WTC11 (cell line): ENCODE measurements at regions of chr11 and their contacts with region 1.

Region 1: DNA sequence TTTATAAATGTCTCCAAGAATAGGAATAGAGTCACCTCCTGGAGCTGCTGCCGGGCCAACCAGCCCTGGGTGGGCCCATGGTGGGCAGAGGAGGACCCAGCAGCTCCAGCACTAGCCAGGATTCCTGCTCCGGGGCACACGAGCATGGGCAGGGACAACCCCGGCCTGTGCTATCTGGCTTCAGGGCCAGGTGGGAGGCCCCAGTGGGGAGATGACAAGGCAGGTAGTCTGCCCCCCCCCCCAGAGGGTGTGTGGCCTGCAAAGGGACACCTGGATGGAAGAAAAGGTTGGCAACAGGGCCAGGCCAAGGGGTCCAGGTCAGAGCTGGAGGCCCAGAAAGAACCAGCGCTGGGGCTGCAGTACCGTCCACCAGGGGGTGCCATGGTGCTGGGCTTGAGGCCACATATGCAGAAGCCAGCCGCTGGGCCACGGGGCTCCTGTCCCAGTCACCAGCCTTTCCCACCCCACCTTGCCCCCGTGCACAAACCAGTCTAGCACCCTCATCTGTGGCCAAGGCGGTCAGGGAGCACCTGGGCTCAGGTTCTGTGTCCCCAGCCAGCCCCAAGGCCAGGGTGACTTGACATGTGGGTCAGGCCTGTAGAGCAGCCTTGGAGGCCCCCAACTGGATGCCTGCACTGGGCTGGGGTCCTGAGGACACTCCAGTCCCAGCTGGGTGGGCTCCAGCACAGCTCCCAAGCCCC is 3.5 kb downstream of the TSPAN32 start:
- DNase-seq: peak; percentile 93
- ATAC-seq: peak; percentile 85
- H3K4me3 Mint-ChIP-seq: no peak overlapping the region
- H3K27ac Mint-ChIP-seq: no peak overlapping the region
- H3K4me1 Mint-ChIP-seq: peaks cover 4% of the 10 kb centered on the region
- H3K27me3 Mint-ChIP-seq: no peaks in the 10 kb centered on the region
- CTCF ChIP-seq: peak; percentile 74

Region 2: DNA sequence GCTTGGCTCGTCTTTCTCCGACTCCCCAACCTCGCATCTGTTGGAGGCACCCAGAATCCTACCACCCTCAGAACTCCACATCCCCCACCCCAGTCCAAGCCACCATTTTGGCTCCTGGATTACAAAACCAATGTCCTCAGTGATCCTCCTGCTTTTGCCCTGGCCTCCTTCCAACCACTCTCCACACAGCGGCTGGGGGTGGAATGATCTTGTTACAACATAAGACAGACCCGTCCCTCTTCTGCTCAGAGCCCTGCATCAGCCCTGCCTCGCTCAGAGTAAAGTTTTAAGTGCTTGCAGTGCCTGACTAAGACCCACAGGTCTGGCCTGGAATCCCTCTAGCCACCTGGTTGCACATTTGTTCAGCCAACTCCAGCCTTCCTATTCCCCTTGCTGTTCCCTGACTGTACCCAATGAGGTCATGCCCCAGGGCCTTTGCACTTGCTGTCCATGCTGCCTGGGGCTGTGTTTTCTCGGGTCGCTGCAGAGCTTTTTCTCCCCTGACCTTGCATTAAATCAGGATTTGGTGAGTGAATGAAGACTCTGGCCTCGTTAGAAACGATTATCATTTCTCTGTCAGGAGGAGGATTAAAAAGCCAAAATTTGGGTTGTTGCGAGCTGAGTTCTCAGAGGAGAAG is 233.4 kb before region 1 on chr11:
- CTCF ChIA-PET with region 1: no interaction called
- POLR2A ChIA-PET with region 1: no interaction called
- DNase-seq: no peak
- ATAC-seq: no peak
- H3K4me3 Mint-ChIP-seq: no peak overlapping the region
- H3K27ac Mint-ChIP-seq: no peak overlapping the region
- H3K4me1 Mint-ChIP-seq: no peaks in the 10 kb centered on the region
- H3K27me3 Mint-ChIP-seq: peaks cover 20% of the 10 kb centered on the region
- CTCF ChIP-seq: no peak

Region 3: GRCh38 chr11:2186669-2187279 is 118.5 kb before region 1 on chr11:
- CTCF ChIA-PET with region 1: interaction called, 24 read pairs
- POLR2A ChIA-PET with region 1: no interaction called
- DNase-seq: peak; percentile 56
- ATAC-seq: peak; percentile 78
- H3K4me3 Mint-ChIP-seq: no peak overlapping the region
- H3K27ac Mint-ChIP-seq: no peak overlapping the region
- H3K4me1 Mint-ChIP-seq: no peaks in the 10 kb centered on the region
- H3K27me3 Mint-ChIP-seq: peaks cover 5% of the 10 kb centered on the region
- CTCF ChIP-seq: peak; percentile 41

Region 4: DNA sequence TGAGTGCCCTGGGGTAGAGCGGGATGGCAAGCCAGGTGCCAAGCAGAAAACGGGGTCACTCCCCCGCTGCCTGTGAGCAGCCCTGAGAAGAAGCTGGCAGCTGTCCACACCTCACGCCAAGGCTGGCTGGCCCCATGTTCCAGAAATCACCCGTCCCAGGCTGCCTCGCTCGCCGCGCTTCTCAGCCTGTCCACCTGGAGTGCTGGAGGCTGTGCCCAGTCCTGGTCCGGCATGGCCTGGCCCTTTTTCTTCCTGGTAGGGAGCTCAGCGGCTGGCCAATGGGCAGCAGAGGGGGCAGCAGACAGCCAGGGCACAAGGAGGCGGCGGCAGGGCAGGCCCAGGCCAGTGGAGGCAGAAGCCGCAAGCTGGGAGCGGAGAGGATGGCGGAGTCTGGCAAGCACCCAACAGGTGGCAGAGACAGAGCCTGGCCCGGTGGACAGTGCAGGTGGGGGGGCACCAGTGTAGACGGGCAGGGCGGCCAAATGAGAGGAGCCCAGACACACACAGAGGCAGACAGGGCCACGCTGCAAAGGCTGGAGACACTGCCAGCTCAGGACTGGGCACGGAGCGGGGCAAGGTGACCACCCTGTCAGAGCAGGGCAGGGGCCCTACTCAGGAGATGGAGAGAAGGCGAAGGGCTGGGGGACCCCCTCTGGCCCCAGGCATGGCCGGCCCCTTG is 96.5 kb before region 1 on chr11:
- CTCF ChIA-PET with region 1: interaction called, 11 read pairs
- POLR2A ChIA-PET with region 1: no interaction called
- DNase-seq: no peak
- ATAC-seq: peak; percentile 64
- H3K4me3 Mint-ChIP-seq: no peak overlapping the region
- H3K27ac Mint-ChIP-seq: no peak overlapping the region
- H3K4me1 Mint-ChIP-seq: peaks cover 10% of the 10 kb centered on the region
- H3K27me3 Mint-ChIP-seq: peaks cover 15% of the 10 kb centered on the region; the same call in 1 of the 2 replicates
- CTCF ChIP-seq: no peak

Region 5: GRCh38 chr11:2377511-2378443 is 72.5 kb after region 1 on chr11:
- CTCF ChIA-PET with region 1: interaction called, 27 read pairs
- POLR2A ChIA-PET with region 1: interaction called, 3 read pairs
- DNase-seq: peak; percentile 65
- ATAC-seq: peak; percentile 25
- H3K4me3 Mint-ChIP-seq: peak overlapping the region; percentile 87
- H3K27ac Mint-ChIP-seq: no peak overlapping the region; the same call in 1 of the 2 replicates
- H3K4me1 Mint-ChIP-seq: peaks cover 18% of the 10 kb centered on the region
- H3K27me3 Mint-ChIP-seq: peaks cover 6% of the 10 kb centered on the region
- CTCF ChIP-seq: no peak

Region 6: DNA sequence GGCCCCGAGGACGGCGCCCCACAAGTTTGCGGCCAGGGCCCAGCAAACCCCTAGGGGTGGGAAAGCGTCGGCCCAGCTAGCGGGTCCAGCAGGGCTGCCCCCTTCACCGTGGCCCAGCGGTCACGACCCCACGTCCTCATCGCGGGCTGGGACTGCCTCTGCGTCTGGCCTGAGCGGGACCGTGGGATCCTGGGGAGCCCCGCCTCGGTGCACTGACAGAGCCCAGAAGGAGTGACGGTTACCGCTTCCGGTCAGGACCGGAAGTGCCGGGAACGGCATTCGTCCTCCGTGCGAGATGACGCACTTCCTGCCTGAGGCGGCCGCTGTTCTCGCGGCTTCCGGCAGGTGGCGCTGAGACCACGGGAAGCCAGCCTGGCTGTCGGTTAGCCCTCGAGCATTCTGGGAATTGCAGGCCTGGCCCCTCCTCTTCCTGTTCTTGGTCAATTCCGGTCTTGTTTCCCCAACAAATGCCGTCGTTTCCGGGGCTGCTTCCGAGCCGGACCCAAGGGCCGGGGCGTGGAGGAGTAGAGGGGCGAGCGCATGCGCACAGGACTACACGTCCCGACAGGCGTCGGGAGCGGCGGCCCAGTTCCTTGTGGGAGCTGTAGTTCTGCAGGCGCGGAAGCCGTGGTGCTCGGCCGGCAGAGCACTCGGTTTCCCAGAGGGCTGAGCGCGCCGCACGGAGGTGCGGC is 94.9 kb after region 1 on chr11 and contains the start of gene TSSC4:
- CTCF ChIA-PET with region 1: interaction called, 62 read pairs
- POLR2A ChIA-PET with region 1: interaction called, 4 read pairs
- DNase-seq: peak; percentile 98
- ATAC-seq: peak; percentile 90
- H3K4me3 Mint-ChIP-seq: peak within 1 kb of the TSS; percentile 83
- H3K27ac Mint-ChIP-seq: 0 out of 2 replicates have a peak within 1 kb of the TSS, but pooled peaks have one; percentile 63
- H3K4me1 Mint-ChIP-seq: peaks cover 5% of the 10 kb centered on the region; the same call in 1 of the 2 replicates
- H3K27me3 Mint-ChIP-seq: no peaks in the 10 kb centered on the region
- CTCF ChIP-seq: peak; percentile 86
- total RNA-seq, gene TSSC4: 41.2 to 45.8 TPM (median 41.4 TPM) in 3 replicates

Region 7: DNA sequence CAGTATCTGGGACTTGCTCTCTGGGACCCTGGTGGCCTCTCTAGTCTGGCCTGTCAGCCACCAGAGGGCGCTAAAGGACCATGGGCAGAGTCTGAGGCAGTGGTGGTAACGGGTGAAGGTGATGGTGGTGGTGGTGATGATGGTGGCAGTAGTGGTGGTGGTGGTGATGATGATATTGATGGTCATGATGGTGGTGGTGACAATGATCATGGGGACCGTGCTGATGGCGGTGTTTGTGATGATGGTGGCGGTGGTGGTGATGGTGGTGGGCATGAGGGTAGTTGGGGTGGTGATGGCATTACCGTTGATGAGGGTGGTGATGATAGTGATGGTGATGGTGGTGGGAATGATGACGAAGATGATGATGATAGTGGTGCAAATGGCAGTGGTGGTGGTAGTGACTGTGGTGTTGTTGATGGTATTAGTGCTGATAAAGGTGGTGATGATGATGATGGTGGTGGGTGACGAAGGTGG is 123.1 kb after region 1 on chr11:
- CTCF ChIA-PET with region 1: interaction called, 398 read pairs
- POLR2A ChIA-PET with region 1: no interaction called
- DNase-seq: peak; percentile 88
- ATAC-seq: peak; percentile 89
- H3K4me3 Mint-ChIP-seq: no peak overlapping the region
- H3K27ac Mint-ChIP-seq: no peak overlapping the region
- H3K4me1 Mint-ChIP-seq: no peaks in the 10 kb centered on the region
- H3K27me3 Mint-ChIP-seq: peaks cover 10% of the 10 kb centered on the region
- CTCF ChIP-seq: peak; percentile 76